ENCODE measurements at regions of chr7 and their contacts with region 1.

Region 1: GRCh38 chr7:6160191-6160623 is 112.2 kb downstream of the CYTH3 start:
- DNase-seq: peak; percentile 48 to 76
- ATAC-seq: peak; percentile 72 to 79
- H3K4me3 ChIP-seq: no peak overlapping the region
- H3K27ac ChIP-seq: peak overlapping the region in 1 of 2 experiments; percentile 25; a peak in 1 of 6 replicates
- H3K4me1 ChIP-seq: no peaks in the 10 kb centered on the region
- CTCF ChIP-seq: peak; percentile 79
- EP300 ChIP-seq: no peak
- POLR2A ChIP-seq: no peak
- RAD21 ChIP-seq: peak; percentile 70 to 77

Region 2: GRCh38 chr7:6117312-6117932 is 42.8 kb before region 1 on chr7:
- CTCF ChIA-PET with region 1: no interaction called
- POLR2A ChIA-PET with region 1: no interaction called
- DNase-seq: no peak
- ATAC-seq: no peak
- H3K4me3 ChIP-seq: no peak overlapping the region
- H3K27ac ChIP-seq: no peak overlapping the region
- H3K4me1 ChIP-seq: no peaks in the 10 kb centered on the region
- CTCF ChIP-seq: no peak
- EP300 ChIP-seq: no peak
- POLR2A ChIP-seq: no peak
- RAD21 ChIP-seq: no peak

Region 3: GRCh38 chr7:6139189-6139996 is 20.8 kb before region 1 on chr7:
- CTCF ChIA-PET with region 1: interaction called, 10 read pairs
- POLR2A ChIA-PET with region 1: no interaction called
- DNase-seq: no peak
- ATAC-seq: no peak
- H3K4me3 ChIP-seq: no peak overlapping the region
- H3K27ac ChIP-seq: no peak overlapping the region
- H3K4me1 ChIP-seq: no peaks in the 10 kb centered on the region
- CTCF ChIP-seq: no peak
- EP300 ChIP-seq: no peak
- POLR2A ChIP-seq: no peak
- RAD21 ChIP-seq: no peak

Region 4: DNA sequence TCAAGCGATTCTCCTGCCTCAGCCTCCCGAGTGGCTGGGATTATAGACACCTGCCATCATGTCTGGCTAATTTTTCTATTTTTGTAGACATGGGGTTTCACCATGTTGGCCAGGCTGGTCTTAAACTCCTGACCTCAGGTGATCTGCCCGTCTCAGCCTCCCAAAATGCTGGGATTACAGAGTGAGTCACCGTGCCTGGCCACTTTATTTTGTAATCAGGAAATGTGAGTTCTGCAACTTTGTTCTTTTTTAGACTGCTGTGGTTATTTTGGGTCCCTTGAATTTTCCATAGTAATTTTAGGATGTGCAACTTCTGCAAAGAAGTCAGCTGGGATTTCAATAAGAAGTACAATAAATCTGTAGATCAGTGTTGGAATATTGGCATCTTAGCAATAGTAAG is 15.4 kb after region 1 on chr7:
- CTCF ChIA-PET with region 1: interaction called, 10 read pairs
- POLR2A ChIA-PET with region 1: no interaction called
- DNase-seq: no peak
- ATAC-seq: no peak
- H3K4me3 ChIP-seq: no peak overlapping the region
- H3K27ac ChIP-seq: no peak overlapping the region
- H3K4me1 ChIP-seq: peaks cover 9% of the 10 kb centered on the region
- CTCF ChIP-seq: no peak
- EP300 ChIP-seq: no peak
- POLR2A ChIP-seq: no peak
- RAD21 ChIP-seq: no peak

Region 5: DNA sequence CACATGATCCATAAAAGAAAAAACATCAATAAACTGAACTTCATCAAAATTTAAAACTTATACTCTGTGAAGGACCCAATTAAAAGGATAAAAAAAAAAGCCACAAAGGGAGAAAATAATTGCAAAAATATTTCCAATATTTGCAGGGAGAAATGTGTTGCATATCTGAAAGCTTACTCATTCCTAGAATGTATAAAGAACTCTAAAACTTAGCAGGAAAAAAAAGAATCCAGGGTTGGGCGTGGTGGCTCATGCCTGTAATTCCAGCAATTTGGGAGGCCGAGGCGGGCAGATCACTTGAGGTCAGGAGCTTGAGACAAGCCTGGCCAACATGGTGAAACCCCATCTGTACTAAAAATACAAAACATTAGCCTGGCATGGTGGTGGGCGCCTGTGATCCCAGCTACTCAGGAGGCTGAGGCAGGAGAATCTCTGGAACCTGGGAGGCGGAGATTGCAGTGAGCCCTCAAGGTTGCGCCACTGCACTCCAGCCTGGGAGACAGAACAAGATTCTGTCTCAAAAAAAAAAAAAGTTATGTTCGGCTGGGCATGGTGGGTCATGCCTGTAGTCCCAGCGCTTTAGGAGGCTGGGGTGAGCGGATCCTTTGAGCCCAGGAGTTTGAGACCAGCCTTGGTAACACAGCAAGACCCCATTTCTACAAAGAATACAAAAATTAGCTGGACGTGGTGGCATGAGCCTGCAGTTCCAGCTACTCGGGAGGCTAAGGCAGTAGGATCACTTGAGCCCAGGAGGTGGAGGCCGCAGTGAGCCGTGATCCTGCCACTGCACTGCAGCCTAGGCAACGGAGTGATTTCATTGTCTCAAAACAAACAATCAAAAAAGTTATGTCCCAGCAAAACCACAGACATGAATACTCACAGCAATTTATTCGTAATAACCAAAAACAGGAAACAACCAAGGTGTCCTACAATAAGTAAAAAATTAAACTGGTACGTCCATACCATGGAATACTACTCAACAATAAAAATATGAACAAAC is 123.5 kb after region 1 on chr7:
- CTCF ChIA-PET with region 1: interaction called, 13 read pairs
- POLR2A ChIA-PET with region 1: interaction called, 3 read pairs
- DNase-seq: peak; percentile 16 to 87
- ATAC-seq: peak; percentile 78 to 83
- H3K4me3 ChIP-seq: no peak overlapping the region; the same call in 2 of the 3 replicates
- H3K27ac ChIP-seq: peak overlapping the region; percentile 98
- H3K4me1 ChIP-seq: peaks cover 49% of the 10 kb centered on the region
- CTCF ChIP-seq: no peak
- EP300 ChIP-seq: peak; percentile 31 to 79; a peak in 3 of 5 replicates
- POLR2A ChIP-seq: no peak
- RAD21 ChIP-seq: no peak

Region 6: DNA sequence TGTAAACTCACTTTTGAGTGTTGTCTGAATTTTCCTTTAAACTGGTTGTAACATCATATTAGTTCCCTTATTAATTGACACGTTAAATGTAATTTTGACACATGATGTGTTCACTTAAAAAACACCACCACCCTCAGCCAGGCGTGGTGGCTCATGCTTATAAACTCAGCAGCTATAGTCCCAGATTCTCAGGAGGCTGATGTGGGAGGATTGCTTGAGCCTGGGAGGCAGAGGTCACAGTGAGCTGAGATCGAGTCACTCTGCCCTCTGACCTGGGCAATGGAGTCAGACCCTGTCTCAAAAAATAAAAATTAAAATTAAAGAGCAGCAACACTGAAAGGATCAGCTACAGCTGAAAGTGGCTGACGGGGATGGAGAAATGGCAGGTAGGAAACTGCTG is 172.2 kb after region 1 on chr7:
- CTCF ChIA-PET with region 1: interaction called, 102 read pairs
- POLR2A ChIA-PET with region 1: no interaction called
- DNase-seq: no peak
- ATAC-seq: no peak
- H3K4me3 ChIP-seq: no peak overlapping the region
- H3K27ac ChIP-seq: no peak overlapping the region
- H3K4me1 ChIP-seq: peaks cover 5% of the 10 kb centered on the region; the same call in 1 of the 3 replicates
- CTCF ChIP-seq: no peak
- EP300 ChIP-seq: no peak
- POLR2A ChIP-seq: no peak
- RAD21 ChIP-seq: no peak

Measured in A549 (cell line).